Left lung (tissue), 14 donors: ENCODE measurements at regions of chr10 and their contacts with region 1.

Region 1: GRCh38 chr10:97207756-97208346 is 22.1 kb upstream of the SLIT1 start:
- DNase-seq: no peak
- ATAC-seq: no peak
- H3K4me3 ChIP-seq: no peak overlapping the region
- H3K27ac ChIP-seq: no peak overlapping the region
- H3K4me1 ChIP-seq: no peaks in the 10 kb centered on the region
- H3K27me3 ChIP-seq: no peaks in the 10 kb centered on the region
- CTCF ChIP-seq: no peak

Region 2: GRCh38 chr10:96061232-96061631 is 1146.6 kb before region 1 on chr10:
- intact Hi-C with region 1: no loop called
- DNase-seq: no peak
- ATAC-seq: no peak
- H3K4me3 ChIP-seq: no peak overlapping the region
- H3K27ac ChIP-seq: no peak overlapping the region
- H3K4me1 ChIP-seq: no peaks in the 10 kb centered on the region
- H3K27me3 ChIP-seq: no peaks in the 10 kb centered on the region
- CTCF ChIP-seq: no peak

Region 3: GRCh38 chr10:97072851-97073665 is 134.8 kb before region 1 on chr10:
- intact Hi-C with region 1: loop called in 1 of 2 experiments (anchors 5 kb)
- DNase-seq: peak in 3 of 4 donors; percentile 76 to 89 (median 80)
- ATAC-seq: peak; percentile 95
- H3K4me3 ChIP-seq: no peak overlapping the region
- H3K27ac ChIP-seq: no peak overlapping the region
- H3K4me1 ChIP-seq: no peaks in the 10 kb centered on the region
- H3K27me3 ChIP-seq: peaks cover 0 to 51% of the 10 kb centered on the region in 2 donors
- CTCF ChIP-seq: peak; percentile 87

Region 4: GRCh38 chr10:97376413-97376812 is 168.6 kb after region 1 on chr10:
- intact Hi-C with region 1: no loop called
- DNase-seq: no peak
- ATAC-seq: no peak
- H3K4me3 ChIP-seq: no peak overlapping the region
- H3K27ac ChIP-seq: peak overlapping the region in 1 of 2 donors; percentile 88
- H3K4me1 ChIP-seq: peaks cover 0 to 50% of the 10 kb centered on the region in 2 donors
- H3K27me3 ChIP-seq: no peaks in the 10 kb centered on the region
- CTCF ChIP-seq: peak in 1 of 2 donors; percentile 15

Region 5: DNA sequence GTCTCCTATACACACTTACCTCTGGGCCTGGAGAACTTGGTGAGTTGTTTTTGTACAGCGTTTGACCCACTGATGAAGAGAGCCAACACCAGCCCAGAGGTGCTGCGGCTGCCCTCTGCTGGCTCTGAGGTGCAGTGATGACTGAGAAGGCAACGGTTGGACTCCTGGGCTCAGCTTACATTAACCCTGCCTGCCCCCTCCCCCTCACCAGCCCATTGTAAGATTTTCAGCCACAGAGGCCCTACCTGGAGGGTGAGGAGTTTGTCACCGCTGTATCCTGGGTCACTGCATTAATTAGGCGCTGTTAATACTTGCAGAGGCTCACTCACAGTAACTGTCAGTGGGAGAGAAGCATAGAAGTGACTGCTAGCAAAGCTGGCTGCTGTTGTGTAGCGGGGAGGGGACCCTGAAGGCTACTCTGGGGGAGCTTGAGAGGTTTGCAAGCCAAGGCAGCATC is 345.8 kb after region 1 on chr10:
- intact Hi-C with region 1: no loop called
- DNase-seq: peak in 2 of 4 donors; percentile 69 to 88
- ATAC-seq: peak; percentile 95
- H3K4me3 ChIP-seq: no peak overlapping the region
- H3K27ac ChIP-seq: no peak overlapping the region
- H3K4me1 ChIP-seq: peaks cover 0 to 6% of the 10 kb centered on the region in 2 donors
- H3K27me3 ChIP-seq: no peaks in the 10 kb centered on the region
- CTCF ChIP-seq: peak; percentile 69 to 71